BJ (cell line): ENCODE measurements at regions of chr4 and their contacts with region 1.

Region 1: GRCh38 chr4:183840311-183840710 is 64.8 kb upstream of the STOX2 start:
- DNase-seq: no peak
- H3K4me3 ChIP-seq: no peak overlapping the region
- H3K27me3 ChIP-seq: no peaks in the 10 kb centered on the region
- CTCF ChIP-seq: peak; percentile 87

Region 2: DNA sequence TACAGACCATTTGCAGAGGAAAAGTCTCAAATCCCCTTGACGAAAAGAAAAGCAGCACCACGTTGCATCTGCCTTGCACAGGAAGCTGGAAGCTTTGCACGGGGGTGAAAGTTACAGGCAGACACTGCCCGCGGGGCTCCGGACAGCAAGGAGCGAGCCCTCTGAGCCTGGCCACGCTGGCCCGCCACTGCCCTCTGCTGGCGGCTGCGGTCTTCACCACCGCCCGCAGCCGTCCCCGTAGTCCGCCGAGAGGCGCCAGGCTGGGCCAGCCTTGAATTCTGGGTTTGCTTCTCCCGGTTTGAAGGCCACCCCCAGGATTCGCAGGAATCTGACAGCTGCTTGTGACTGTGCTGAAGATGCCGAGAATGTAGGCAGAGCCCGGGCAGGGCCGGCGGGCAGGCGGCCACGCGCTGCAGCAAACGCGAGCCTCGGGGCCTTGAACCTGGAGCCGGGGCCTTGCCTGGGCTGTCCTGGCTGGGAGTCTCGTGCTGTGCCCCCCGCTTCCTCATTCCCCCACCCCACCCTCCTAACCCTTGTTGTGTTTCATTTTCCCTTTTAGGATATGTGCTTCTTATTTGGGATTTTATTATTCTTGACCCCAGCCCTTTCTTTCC is 328.2 kb after region 1 on chr4:
- CTCF ChIA-PET with region 1: interaction called, 27 read pairs
- POLR2A ChIA-PET with region 1: no interaction called
- DNase-seq: no peak
- H3K4me3 ChIP-seq: no peak overlapping the region
- H3K27me3 ChIP-seq: no peaks in the 10 kb centered on the region
- CTCF ChIP-seq: peak; percentile 98